ENCODE measurements at regions of chr6 and their contacts with region 1.

Region 1: GRCh38 chr6:113564371-113565161 is 292.6 kb upstream of the MARCKS start:
- DNase-seq: peak; percentile 94
- H3K4me3 ChIP-seq: peak overlapping the region; percentile 44 to 51 (median 48)
- H3K27ac ChIP-seq: peak overlapping the region; percentile 68 to 82 (median 72)
- H3K4me1 ChIP-seq: peaks cover 2 to 20% (median 17%) of the 10 kb centered on the region in 4 donors
- H3K27me3 ChIP-seq: no peaks in the 10 kb centered on the region
- CTCF ChIP-seq: peak in 2 of 3 experiments; percentile 17 to 28
- EP300 ChIP-seq: peak; percentile 42
- POLR2A ChIP-seq: no peak

Region 2: DNA sequence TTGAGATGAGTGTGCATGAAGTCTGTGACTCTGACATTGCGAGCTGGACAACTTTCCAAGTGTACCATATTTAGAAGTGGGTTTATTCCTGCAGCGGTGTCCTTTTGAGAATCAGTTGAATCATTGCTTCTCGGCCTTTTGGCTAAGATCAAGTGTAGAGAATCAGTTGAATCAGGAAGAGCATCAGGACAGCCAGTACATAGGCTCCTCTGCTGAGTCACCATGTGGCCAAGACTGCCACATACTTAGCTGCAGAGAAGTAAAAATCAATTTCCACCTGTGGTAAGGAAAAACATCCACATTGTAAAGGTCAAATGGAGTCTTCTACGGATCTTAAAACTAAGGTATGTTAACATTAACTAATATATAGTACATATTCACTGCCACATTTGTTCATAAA is 135.9 kb before region 1 on chr6:
- intact Hi-C with region 1: loop called (anchors 10 kb)
- DNase-seq: no peak
- H3K4me3 ChIP-seq: no peak overlapping the region
- H3K27ac ChIP-seq: no peak overlapping the region
- H3K4me1 ChIP-seq: peaks cover 5 to 15% (median 13%) of the 10 kb centered on the region in 4 donors
- H3K27me3 ChIP-seq: no peaks in the 10 kb centered on the region
- CTCF ChIP-seq: no peak
- EP300 ChIP-seq: no peak
- POLR2A ChIP-seq: no peak

Region 3: DNA sequence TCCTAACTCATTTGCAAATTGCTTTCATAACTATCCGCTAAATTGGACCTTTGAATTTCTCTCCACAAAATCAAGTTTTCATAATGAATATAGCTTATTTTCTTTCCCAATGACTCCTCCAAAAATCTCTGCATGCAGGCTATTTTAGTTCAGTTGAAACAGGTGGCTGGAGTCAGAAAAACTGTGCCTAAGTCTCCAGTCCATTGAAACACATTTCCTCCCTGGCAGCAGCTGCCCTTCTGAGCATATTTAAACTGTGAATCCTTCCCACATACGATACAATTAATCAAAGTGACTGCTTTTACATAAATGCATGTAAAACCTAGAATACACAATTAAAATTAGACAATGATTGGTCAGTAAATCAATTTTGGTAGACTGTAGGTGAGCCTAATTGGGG is 52.0 kb before region 1 on chr6:
- intact Hi-C with region 1: no loop called
- DNase-seq: no peak
- H3K4me3 ChIP-seq: no peak overlapping the region
- H3K27ac ChIP-seq: no peak overlapping the region
- H3K4me1 ChIP-seq: no peaks in the 10 kb centered on the region
- H3K27me3 ChIP-seq: no peaks in the 10 kb centered on the region
- CTCF ChIP-seq: no peak
- EP300 ChIP-seq: no peak
- POLR2A ChIP-seq: no peak

Measured in esophagus muscularis mucosa (tissue), 4 donors.